ENCODE measurements at regions of chr20 and their contacts with region 1.

Region 1: GRCh38 chr20:51651967-51652549 is 109.5 kb upstream of the NFATC2 start:
- DNase-seq: no peak
- ATAC-seq: no peak
- H3K4me3 ChIP-seq: no peak overlapping the region
- H3K27ac ChIP-seq: no peak overlapping the region
- H3K4me1 ChIP-seq: no peaks in the 10 kb centered on the region
- H3K27me3 ChIP-seq: no peaks in the 10 kb centered on the region
- CTCF ChIP-seq: no peak

Region 2: GRCh38 chr20:51042654-51043247 is 609.3 kb before region 1 on chr20:
- CTCF ChIA-PET with region 1: no interaction called
- POLR2A ChIA-PET with region 1: no interaction called
- in situ Hi-C with region 1: no loop called
- intact Hi-C with region 1: no loop called
- DNase-seq: no peak
- ATAC-seq: peak; percentile 65
- H3K4me3 ChIP-seq: no peak overlapping the region
- H3K27ac ChIP-seq: no peak overlapping the region
- H3K4me1 ChIP-seq: no peaks in the 10 kb centered on the region
- H3K27me3 ChIP-seq: no peaks in the 10 kb centered on the region
- CTCF ChIP-seq: no peak

Region 3: GRCh38 chr20:51595058-51595532 is 57.0 kb before region 1 on chr20:
- CTCF ChIA-PET with region 1: no interaction called
- POLR2A ChIA-PET with region 1: no interaction called
- in situ Hi-C with region 1: no loop called
- intact Hi-C with region 1: no loop called
- DNase-seq: peak; percentile 82
- ATAC-seq: peak; percentile 99
- H3K4me3 ChIP-seq: no peak overlapping the region
- H3K27ac ChIP-seq: peak overlapping the region; percentile 80
- H3K4me1 ChIP-seq: peaks cover 13% of the 10 kb centered on the region
- H3K27me3 ChIP-seq: no peaks in the 10 kb centered on the region
- CTCF ChIP-seq: peak; percentile 92

Region 4: GRCh38 chr20:51772236-51772635 is 120.2 kb after region 1 on chr20:
- CTCF ChIA-PET with region 1: no interaction called
- POLR2A ChIA-PET with region 1: no interaction called
- in situ Hi-C with region 1: no loop called
- intact Hi-C with region 1: no loop called
- DNase-seq: no peak
- ATAC-seq: no peak
- H3K4me3 ChIP-seq: no peak overlapping the region
- H3K27ac ChIP-seq: no peak overlapping the region
- H3K4me1 ChIP-seq: 0 out of 2 replicates have a peak, but pooled peaks cover 2% of the 10 kb centered on the region
- H3K27me3 ChIP-seq: no peaks in the 10 kb centered on the region
- CTCF ChIP-seq: no peak

Region 5: DNA sequence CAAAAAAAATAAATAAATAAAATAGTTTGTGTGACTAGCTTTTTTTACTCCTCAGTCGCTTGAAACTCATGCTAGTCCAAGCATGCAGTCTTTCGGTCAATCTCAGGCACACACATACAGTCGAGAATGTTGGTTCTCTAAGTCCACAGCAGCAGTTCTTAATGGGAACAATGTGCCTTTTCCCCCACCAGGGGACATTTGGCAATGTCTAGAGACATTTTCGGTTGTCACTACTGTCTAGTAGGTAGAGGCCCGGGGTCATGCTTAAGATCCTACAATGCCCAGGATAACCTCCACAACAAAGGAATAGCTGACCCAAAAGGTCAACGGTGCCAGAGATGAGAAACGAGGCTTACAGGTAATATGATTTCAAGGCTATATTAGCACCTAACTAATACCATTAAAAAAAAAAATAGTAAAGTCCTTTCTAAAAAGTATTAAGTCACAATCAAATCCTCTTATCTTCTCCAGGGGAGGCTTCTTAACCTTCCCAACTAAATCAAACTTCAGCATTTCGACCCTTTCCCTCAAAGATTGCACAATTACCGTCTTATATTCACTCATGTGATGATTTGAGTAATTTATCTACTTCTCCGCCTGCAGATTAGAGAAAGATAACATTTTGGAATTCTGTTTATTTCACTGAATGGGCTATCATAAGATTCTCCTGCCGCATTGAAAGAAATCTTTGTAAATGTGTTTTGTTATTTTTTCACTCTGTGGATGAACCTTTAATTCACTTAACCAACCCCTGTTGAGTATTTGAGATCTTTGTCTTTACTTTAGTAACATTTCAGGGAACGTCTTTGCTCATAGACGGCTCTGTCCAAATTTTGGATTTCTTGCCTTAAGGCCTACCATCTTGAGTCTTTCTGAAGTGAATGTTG is 158.3 kb after region 1 on chr20:
- CTCF ChIA-PET with region 1: no interaction called
- POLR2A ChIA-PET with region 1: interaction called, 10 read pairs
- in situ Hi-C with region 1: no loop called
- intact Hi-C with region 1: no loop called
- DNase-seq: no peak
- ATAC-seq: no peak
- H3K4me3 ChIP-seq: no peak overlapping the region
- H3K27ac ChIP-seq: no peak overlapping the region
- H3K4me1 ChIP-seq: no peaks in the 10 kb centered on the region
- H3K27me3 ChIP-seq: no peaks in the 10 kb centered on the region
- CTCF ChIP-seq: no peak; the same call in 1 of the 2 replicates

Measured in Panc1 (cell line).